CD4-positive, alpha-beta memory T cell (primary cell): ENCODE measurements at regions of chr1 and their contacts with region 1.

Region 1: DNA sequence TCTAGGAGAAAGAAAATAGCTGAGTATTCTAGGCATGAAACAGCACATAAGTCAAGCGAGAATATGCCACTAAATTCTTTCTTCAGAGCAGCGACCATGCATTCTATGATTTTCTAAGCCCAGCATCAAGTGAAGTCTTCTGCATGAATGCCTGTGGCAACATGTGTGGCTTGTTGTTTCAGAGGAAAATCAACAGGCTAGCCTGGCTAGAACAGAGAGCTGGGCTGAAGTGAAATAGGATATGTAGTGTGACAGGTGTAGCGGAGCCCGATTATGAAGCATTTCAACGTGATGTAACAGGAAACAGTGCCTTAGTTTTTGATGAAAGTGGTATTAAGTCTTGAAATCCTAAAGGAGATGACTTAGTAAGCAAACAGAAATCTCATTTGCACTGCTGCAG is 7.0 kb downstream of the CSDE1 start:
- DNase-seq: no peak
- H3K4me3 ChIP-seq: no peak overlapping the region
- H3K4me3 Mint-ChIP-seq: peak overlapping the region; percentile 16 to 70 (median 51)
- H3K27ac ChIP-seq: no peak overlapping the region
- H3K27ac Mint-ChIP-seq: peak overlapping the region in 4 of 7 donors; percentile 14 to 80 (median 57)
- H3K4me1 ChIP-seq: peaks cover 95% of the 10 kb centered on the region
- H3K4me1 Mint-ChIP-seq: peaks cover 76 to 94% (median 87%) of the 10 kb centered on the region in 4 donors
- H3K27me3 ChIP-seq: no peaks in the 10 kb centered on the region
- H3K27me3 Mint-ChIP-seq: no peaks in the 10 kb centered on the region

Region 2: DNA sequence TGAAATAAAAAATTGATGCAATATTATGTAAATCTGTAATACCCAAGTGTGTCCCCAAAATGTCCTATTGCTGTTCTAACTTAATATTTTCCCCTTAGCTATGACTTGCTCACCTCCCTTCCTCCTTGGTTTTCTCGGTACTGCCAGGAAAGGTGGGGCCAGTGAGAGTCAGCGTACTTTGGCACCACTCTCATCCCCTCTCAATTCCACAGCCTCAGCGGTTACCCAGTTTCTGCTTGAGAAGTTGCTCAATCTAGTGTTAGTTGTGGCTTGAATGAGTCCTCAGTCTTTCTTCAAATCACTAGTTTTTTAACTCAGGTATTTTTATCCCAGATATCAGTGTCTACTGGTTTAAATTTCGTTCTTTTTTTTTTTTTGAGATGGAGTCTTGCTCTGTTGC is 201.6 kb before region 1 on chr1:
- CTCF ChIA-PET with region 1: no interaction called
- POLR2A ChIA-PET with region 1: no interaction called
- intact Hi-C with region 1: no loop called
- DNase-seq: no peak
- H3K4me3 ChIP-seq: no peak overlapping the region
- H3K4me3 Mint-ChIP-seq: no peak overlapping the region
- H3K27ac ChIP-seq: no peak overlapping the region
- H3K27ac Mint-ChIP-seq: no peak overlapping the region
- H3K4me1 ChIP-seq: no peaks in the 10 kb centered on the region
- H3K4me1 Mint-ChIP-seq: no peaks in the 10 kb centered on the region
- H3K27me3 ChIP-seq: no peaks in the 10 kb centered on the region
- H3K27me3 Mint-ChIP-seq: peaks cover 2 to 4% of the 10 kb centered on the region in 2 donors

Region 3: DNA sequence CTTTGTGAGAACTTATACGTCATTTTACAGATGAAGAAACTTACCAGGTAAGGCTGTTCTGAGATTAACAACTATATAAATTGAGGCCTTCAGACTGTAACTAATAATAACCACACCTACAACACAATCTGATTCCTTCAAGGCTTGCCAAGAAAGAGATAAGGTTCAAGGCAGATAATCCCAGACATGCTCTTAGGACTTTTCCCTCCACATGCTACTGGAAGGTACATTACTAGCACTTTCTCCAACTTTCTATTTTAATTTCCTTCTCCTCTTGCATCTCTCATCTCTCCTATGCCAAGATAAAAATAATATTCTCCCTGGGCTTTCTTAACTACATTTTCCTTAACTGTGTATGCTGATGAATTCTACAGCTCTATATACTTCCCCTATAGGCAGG is 15.3 kb before region 1 on chr1:
- CTCF ChIA-PET with region 1: interaction called, 4 read pairs
- POLR2A ChIA-PET with region 1: no interaction called
- intact Hi-C with region 1: loop called (anchors 2 kb)
- DNase-seq: no peak
- H3K4me3 ChIP-seq: no peak overlapping the region
- H3K4me3 Mint-ChIP-seq: no peak overlapping the region
- H3K27ac ChIP-seq: no peak overlapping the region
- H3K27ac Mint-ChIP-seq: peak overlapping the region in 3 of 7 donors; percentile 47 to 89 (median 84)
- H3K4me1 ChIP-seq: no peaks in the 10 kb centered on the region
- H3K4me1 Mint-ChIP-seq: peaks cover 10 to 17% (median 13%) of the 10 kb centered on the region in 4 donors
- H3K27me3 ChIP-seq: no peaks in the 10 kb centered on the region
- H3K27me3 Mint-ChIP-seq: no peaks in the 10 kb centered on the region